Endothelial cell of umbilical vein (primary cell): ENCODE measurements at regions of chr11 and their contacts with region 1.

Region 1: DNA sequence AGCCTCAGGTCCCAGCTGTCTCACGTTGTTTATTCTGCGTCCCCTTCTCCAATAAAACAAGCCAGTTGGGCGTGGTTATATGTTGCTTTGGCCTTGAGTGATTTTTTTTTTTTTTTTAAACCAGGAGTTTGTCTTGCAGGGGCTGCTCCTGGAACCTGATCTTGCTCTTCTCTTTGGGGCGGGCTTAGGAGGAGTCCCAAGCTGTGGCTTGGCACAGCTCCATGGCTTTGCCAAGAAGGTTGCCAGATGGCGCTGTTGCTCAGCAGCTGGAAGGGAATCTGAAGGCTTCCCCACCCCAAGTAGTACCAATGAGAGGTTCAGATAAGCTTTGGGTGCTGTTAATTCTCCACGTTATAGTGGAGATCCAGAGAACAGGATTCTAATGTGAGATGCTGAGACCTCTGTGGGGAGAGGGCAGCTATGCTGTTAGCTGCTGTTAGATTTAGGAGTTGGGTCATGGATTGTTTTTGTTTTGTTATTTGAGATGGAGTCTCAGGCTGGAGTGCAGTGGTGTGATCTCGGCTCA is 2.0 kb upstream of the FERMT3 start:
- DNase-seq: peak; percentile 90
- H3K4me3 ChIP-seq: no peak overlapping the region
- H3K27ac ChIP-seq: no peak overlapping the region
- H3K4me1 ChIP-seq: peaks cover 34% of the 10 kb centered on the region
- H3K27me3 ChIP-seq: no peaks in the 10 kb centered on the region
- CTCF ChIP-seq: peak; percentile 82 to 84
- POLR2A ChIP-seq: peak; percentile 27

Region 2: GRCh38 chr11:64185816-64186498 is 18.6 kb before region 1 on chr11 and contains the start of gene STIP1:
- CTCF ChIA-PET with region 1: interaction called, 27 read pairs
- POLR2A ChIA-PET with region 1: interaction called, 6 read pairs
- dilution Hi-C with region 1: no loop called
- intact Hi-C with region 1: loop called (anchors 1 kb)
- DNase-seq: peak; percentile 100
- H3K4me3 ChIP-seq: peak within 1 kb of the TSS; percentile 17 to 65 (median 56)
- H3K27ac ChIP-seq: peak within 1 kb of the TSS; percentile 64
- H3K4me1 ChIP-seq: peaks cover 14% of the 10 kb centered on the region
- H3K27me3 ChIP-seq: no peaks in the 10 kb centered on the region
- CTCF ChIP-seq: peak; percentile 30 to 67
- POLR2A ChIP-seq: no peak
- total RNA-seq, gene STIP1: 223 and 226 TPM in 2 replicates

Region 3: GRCh38 chr11:64225612-64226506 is 21.3 kb after region 1 on chr11 and contains the starts of genes NUDT22 and TRPT1:
- CTCF ChIA-PET with region 1: interaction called, 35 read pairs
- POLR2A ChIA-PET with region 1: interaction called, 12 read pairs
- dilution Hi-C with region 1: no loop called
- intact Hi-C with region 1: loop called (anchors 1 kb)
- DNase-seq: peak; percentile 83
- H3K4me3 ChIP-seq: peak within 1 kb of the TSS; percentile 62 to 70 (median 66)
- H3K27ac ChIP-seq: peak within 1 kb of the TSS; percentile 55
- H3K4me1 ChIP-seq: peaks cover 14% of the 10 kb centered on the region
- H3K27me3 ChIP-seq: no peaks in the 10 kb centered on the region
- CTCF ChIP-seq: peak; percentile 3 to 13
- POLR2A ChIP-seq: peak; percentile 90
- total RNA-seq, gene NUDT22: 37.1 and 37.8 TPM in 2 replicates
- total RNA-seq, gene TRPT1: 26.2 and 28.0 TPM in 2 replicates

Region 4: DNA sequence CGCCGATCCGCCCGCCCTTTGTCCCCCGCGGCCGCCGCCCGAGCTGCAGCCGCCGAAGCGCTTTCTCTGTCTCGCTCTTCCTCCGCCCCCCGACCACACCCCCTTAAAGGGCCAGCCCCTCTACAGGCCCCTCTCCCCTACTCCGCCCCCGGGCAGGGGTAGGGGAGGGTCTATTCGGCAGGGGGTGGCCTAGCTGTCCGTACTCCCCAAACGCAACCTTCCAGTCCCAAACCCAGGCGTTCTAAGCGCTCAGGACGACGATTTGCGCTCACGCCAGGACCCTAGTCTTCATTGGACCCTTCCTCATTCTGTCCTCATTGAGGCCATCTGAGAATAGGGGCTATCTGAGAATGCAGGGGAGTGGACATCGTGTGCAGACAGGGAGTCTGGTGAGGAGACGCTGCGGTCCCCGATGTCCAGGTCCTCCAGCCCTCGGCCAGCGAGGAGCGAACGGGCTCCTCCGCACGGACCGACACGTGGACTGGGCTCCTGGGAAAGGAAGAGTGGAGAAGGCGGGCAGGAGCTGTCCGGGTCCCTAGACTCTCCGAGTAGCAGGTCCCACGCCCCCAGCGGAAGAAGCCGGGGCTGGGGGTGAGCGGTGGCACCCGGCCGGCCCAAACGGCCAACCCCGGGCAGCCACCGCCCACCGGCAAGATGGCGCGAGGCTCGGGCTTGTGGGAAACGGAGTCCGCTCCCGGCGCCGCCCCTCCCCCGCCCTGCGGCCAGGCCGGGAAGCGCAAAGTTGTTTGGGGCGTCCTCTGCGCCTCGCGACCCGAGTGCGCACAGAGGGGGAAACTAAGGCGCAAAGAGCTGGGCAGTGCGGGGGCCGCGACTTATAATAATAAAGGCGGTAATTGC is 42.6 kb after region 1 on chr11 and contains the start of gene PPP1R14B:
- CTCF ChIA-PET with region 1: interaction called, 43 read pairs
- POLR2A ChIA-PET with region 1: no interaction called
- dilution Hi-C with region 1: no loop called
- intact Hi-C with region 1: no loop called
- DNase-seq: peak; percentile 80
- H3K4me3 ChIP-seq: peak within 1 kb of the TSS; percentile 67 to 78 (median 75)
- H3K27ac ChIP-seq: peak within 1 kb of the TSS; percentile 47
- H3K4me1 ChIP-seq: peaks cover 28% of the 10 kb centered on the region
- H3K27me3 ChIP-seq: no peaks in the 10 kb centered on the region
- CTCF ChIP-seq: no peak
- POLR2A ChIP-seq: peak; percentile 14
- total RNA-seq, gene PPP1R14B: 431 TPM in 2 replicates

Region 5: DNA sequence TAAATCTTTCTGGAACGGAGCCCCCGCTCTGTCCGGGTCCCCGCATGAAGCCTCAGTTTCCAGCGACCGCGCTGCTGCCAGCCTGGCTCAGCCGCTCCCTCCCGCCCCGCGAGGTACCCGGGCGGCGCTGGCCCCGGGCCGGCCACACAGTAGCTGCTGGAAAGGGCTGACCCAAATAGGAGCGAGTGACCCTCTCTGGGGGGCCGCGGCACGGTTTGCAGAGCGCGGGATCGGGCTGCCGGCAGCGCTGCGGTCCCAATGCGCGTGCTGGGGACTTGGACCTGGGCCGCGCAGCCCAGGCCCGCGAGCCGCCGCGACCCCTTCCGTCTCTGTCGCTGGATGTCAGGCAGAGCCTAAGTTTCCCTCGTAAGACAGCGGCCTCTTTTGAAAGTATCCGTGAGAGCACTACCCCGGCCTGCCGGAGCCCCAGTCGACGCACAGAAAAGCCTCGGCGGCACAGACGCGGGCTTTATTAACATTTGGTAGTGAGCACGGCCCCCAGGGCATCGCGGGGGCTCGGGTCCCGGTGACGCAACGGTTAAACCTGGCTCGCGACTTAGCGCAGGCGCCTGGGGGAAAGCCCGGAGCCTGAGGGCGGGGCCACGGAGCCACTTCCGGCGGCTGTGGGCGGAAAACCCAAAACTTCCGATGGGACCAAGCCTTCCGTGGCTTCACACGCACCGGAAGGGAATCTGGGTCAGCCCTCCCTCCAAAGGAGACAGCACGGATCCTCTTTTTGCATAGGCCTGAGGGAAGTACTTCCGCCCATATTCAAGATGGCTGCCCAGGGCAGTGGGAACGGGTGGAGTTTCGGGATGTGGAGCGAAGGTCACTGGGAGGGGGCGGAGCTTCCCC is 65.1 kb after region 1 on chr11:
- CTCF ChIA-PET with region 1: interaction called, 16 read pairs
- POLR2A ChIA-PET with region 1: interaction called, 5 read pairs
- dilution Hi-C with region 1: no loop called
- intact Hi-C with region 1: loop called (anchors 1 kb)
- DNase-seq: peak; percentile 100
- H3K4me3 ChIP-seq: peak overlapping the region; percentile 1 to 66 (median 58)
- H3K27ac ChIP-seq: peak overlapping the region; percentile 76
- H3K4me1 ChIP-seq: peaks cover 38% of the 10 kb centered on the region
- H3K27me3 ChIP-seq: no peaks in the 10 kb centered on the region
- CTCF ChIP-seq: no peak
- POLR2A ChIP-seq: peak; percentile 73

Region 6: GRCh38 chr11:64331557-64332371 is 127.2 kb after region 1 on chr11:
- CTCF ChIA-PET with region 1: interaction called, 17 read pairs
- POLR2A ChIA-PET with region 1: no interaction called
- dilution Hi-C with region 1: no loop called
- intact Hi-C with region 1: no loop called
- DNase-seq: peak; percentile 74
- H3K4me3 ChIP-seq: no peak overlapping the region
- H3K27ac ChIP-seq: no peak overlapping the region
- H3K4me1 ChIP-seq: peaks cover 3% of the 10 kb centered on the region
- H3K27me3 ChIP-seq: no peaks in the 10 kb centered on the region
- CTCF ChIP-seq: peak; percentile 64 to 82
- POLR2A ChIP-seq: no peak